ENCODE measurements at regions of chr1 and their contacts with region 1.

Region 1: DNA sequence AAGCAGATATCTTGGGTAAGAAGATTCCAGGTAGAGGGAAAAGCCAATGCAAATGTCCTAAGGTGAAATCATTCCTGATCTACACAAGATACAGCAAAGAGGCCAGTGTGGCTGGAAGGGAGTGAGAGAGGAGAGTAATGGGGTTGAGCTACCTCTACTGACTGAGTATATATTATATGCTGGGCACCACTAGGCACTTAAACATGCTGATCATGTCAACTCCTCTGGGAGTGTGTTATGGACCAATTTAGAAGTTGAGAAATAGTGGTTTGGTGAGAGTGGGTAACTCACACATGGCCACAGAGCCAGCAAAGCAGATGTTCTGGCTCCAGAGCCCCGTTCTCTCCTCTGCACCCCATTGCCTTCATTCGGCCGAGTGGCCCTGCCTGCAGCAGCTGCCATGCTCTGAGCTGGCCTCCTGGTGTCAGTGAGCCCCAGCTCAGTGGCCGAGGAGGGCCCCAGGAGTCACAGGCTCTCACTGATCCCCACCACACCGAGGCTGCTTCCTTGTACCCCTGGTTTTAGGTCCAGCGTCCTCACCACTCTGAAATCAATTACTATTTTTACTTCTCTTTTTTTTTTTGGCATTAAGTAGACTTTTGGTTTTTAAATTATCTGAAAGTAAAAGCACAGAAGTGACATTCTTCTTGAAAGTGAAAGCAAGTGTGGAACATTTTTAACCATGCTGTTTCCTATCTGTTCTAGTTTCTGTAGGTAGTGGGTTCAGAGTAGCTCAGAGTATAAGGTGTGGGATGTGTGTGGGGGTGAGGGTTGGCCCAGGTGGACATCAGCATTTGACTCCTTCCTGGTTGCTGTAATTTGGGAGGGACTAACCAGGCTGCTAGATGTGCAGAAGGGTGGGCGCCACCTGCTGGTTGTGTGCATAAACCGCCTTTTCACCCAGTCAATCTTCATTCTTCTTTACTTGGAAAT is 45.8 kb upstream of the CRNN start:
- DNase-seq: peak; percentile 64
- ATAC-seq: peak; percentile 77
- H3K4me3 Mint-ChIP-seq: peak overlapping the region; percentile 69
- H3K27ac Mint-ChIP-seq: peak overlapping the region; percentile 91
- H3K4me1 Mint-ChIP-seq: peaks cover 28% of the 10 kb centered on the region
- H3K27me3 Mint-ChIP-seq: no peaks in the 10 kb centered on the region
- CTCF ChIP-seq: peak; percentile 84

Region 2: GRCh38 chr1:151594143-151594625 is 865.7 kb before region 1 on chr1:
- CTCF ChIA-PET with region 1: no interaction called
- POLR2A ChIA-PET with region 1: no interaction called
- intact Hi-C with region 1: loop called (anchors 5 kb)
- DNase-seq: peak; percentile 66
- ATAC-seq: peak; percentile 97
- H3K4me3 Mint-ChIP-seq: peak overlapping the region; percentile 69
- H3K27ac Mint-ChIP-seq: peak overlapping the region; percentile 46
- H3K4me1 Mint-ChIP-seq: peaks cover 10% of the 10 kb centered on the region
- H3K27me3 Mint-ChIP-seq: peaks cover 11% of the 10 kb centered on the region
- CTCF ChIP-seq: peak; percentile 45

Region 3: DNA sequence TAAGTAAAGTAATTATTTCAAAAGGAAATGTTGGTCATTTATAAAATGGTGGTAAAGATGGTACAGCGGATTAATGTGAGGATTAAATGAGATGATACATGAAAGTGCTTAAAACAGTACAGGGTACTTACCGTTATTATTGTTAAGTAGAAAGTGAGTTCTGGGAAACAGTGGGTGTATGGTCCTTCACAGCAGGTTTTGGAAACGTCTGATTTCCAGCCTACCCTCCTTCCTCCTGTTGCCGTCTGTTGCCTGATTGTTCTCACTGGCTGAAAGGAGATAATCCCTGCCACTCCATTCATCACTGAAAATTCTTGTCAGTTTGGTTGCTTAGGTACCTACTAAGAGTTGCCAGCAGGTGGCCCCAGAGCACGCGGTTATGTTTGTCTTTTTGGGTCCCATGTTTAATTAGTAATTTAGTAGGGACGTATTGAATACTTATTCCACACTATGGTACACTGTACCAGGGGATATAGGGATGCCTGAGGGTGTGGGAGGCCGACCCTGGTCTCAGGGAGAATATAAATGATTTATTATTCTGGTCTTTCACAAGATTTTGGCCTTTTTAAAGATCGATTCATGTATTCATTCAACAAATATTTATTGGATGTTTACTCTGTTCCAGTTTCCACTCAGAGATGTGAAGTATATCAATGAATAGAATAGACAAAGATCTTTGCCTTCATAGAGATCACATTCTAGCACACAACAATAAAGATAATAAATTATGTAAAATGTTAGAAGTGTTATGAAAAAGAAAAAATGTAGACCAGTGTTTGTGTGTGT is 270.0 kb before region 1 on chr1:
- CTCF ChIA-PET with region 1: interaction called, 102 read pairs
- POLR2A ChIA-PET with region 1: interaction called, 3 read pairs
- intact Hi-C with region 1: loop called (anchors 1 kb)
- DNase-seq: peak; percentile 34
- ATAC-seq: peak; percentile 73
- H3K4me3 Mint-ChIP-seq: peak overlapping the region; percentile 82
- H3K27ac Mint-ChIP-seq: peak overlapping the region; percentile 43
- H3K4me1 Mint-ChIP-seq: peaks cover 5% of the 10 kb centered on the region
- H3K27me3 Mint-ChIP-seq: peaks cover 10% of the 10 kb centered on the region
- CTCF ChIP-seq: peak; percentile 51

Region 4: GRCh38 chr1:152398812-152399698 is 60.8 kb before region 1 on chr1:
- CTCF ChIA-PET with region 1: interaction called, 12 read pairs
- POLR2A ChIA-PET with region 1: no interaction called
- intact Hi-C with region 1: no loop called
- DNase-seq: no peak
- ATAC-seq: no peak
- H3K4me3 Mint-ChIP-seq: no peak overlapping the region
- H3K27ac Mint-ChIP-seq: no peak overlapping the region
- H3K4me1 Mint-ChIP-seq: no peaks in the 10 kb centered on the region
- H3K27me3 Mint-ChIP-seq: peaks cover 11% of the 10 kb centered on the region
- CTCF ChIP-seq: no peak

Region 5: DNA sequence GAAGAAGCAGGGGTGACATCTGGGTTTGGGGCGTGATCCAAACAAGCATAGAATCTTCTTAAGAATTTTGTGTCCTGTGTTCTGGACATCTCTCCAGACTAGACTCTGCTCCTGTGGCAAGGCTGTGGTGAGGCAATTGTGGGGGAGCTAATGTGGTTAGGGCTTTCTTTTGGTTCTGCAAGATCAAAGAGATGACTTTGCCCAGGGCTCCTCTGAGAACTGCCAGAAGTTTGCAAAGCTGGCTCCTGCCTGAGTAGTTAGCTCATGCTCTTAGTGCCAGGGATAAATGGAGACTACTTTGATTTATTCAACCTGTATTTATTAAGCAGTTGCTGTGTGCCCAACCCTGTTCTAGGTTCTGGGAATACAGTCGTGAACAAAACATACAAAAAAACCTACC is 11.8 kb before region 1 on chr1:
- CTCF ChIA-PET with region 1: interaction called, 29 read pairs
- POLR2A ChIA-PET with region 1: no interaction called
- intact Hi-C with region 1: no loop called
- DNase-seq: no peak
- ATAC-seq: no peak
- H3K4me3 Mint-ChIP-seq: no peak overlapping the region
- H3K27ac Mint-ChIP-seq: no peak overlapping the region
- H3K4me1 Mint-ChIP-seq: no peaks in the 10 kb centered on the region
- H3K27me3 Mint-ChIP-seq: no peaks in the 10 kb centered on the region
- CTCF ChIP-seq: no peak

Measured in activated B cell treated with CpG ODN at 0.5 μM for 24 hours (primary cell).